ENCODE measurements at regions of chr1 and their contacts with region 1.

Region 1: GRCh38 chr1:147882535-147882934 is 20.1 kb upstream of the GJA8 start:
- DNase-seq: no peak
- ATAC-seq: no peak
- H3K4me3 ChIP-seq: no peak overlapping the region
- H3K27ac ChIP-seq: no peak overlapping the region
- H3K4me1 ChIP-seq: no peaks in the 10 kb centered on the region
- H3K27me3 ChIP-seq: peaks cover 0 to 4% (median 0%) of the 10 kb centered on the region in 4 donors
- CTCF ChIP-seq: no peak

Region 2: DNA sequence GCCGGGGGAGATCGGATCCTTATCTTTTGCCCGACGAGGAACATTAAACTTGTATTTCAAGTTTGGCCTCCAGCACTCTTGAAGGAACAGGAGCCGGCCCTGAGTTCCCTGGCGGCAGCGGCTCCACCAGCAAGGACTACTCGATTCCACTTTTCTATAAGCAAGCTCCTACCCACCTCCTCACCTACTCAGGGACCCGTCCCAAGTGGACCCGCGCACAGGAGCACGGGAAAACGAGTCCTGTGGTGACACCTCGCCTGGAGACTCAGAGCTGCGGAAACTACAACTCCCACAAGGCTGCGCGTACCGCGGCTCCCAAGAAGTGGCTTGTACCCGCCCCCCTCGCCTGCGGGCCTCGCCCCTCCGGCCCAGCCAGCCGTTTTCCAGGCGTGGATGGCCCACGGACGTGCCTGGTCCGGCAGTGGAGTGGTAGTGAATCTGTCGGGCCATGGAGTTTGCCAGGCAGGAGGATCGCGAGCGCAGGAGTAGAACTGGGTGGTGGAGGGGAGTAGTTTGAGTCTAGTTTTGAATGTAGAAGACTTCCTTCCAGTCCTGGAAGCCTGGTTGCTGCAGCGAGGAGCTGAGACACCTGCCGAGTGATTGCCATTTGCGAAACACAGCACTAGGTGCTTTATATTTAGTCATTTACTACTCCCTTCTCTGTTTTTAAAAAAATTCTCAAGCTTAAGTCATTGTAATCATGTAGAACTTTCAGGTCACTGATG is 212.1 kb before region 1 on chr1 and contains the start of gene ACP6:
- intact Hi-C with region 1: no loop called
- DNase-seq: peak; percentile 90 to 98 (median 96)
- ATAC-seq: peak; percentile 96 to 99 (median 98)
- H3K4me3 ChIP-seq: peak within 1 kb of the TSS; percentile 70 to 85 (median 76)
- H3K27ac ChIP-seq: peak within 1 kb of the TSS; percentile 78 to 87 (median 84)
- H3K4me1 ChIP-seq: peaks cover 0 to 14% (median 9%) of the 10 kb centered on the region in 3 donors
- H3K27me3 ChIP-seq: no peaks in the 10 kb centered on the region
- CTCF ChIP-seq: no peak
- total RNA-seq, gene ACP6: 8.5 to 15.9 (median 9.8) TPM

Region 3: GRCh38 chr1:147723691-147724323 is 158.7 kb before region 1 on chr1:
- intact Hi-C with region 1: loop called in 1 of 3 experiments (anchors 10 kb)
- DNase-seq: peak in 1 of 6 donors; percentile 11
- ATAC-seq: peak in 3 of 4 donors; percentile 78 to 93 (median 80)
- H3K4me3 ChIP-seq: no peak overlapping the region
- H3K27ac ChIP-seq: no peak overlapping the region
- H3K4me1 ChIP-seq: peaks cover 0 to 3% (median 0%) of the 10 kb centered on the region in 3 donors
- H3K27me3 ChIP-seq: no peaks in the 10 kb centered on the region
- CTCF ChIP-seq: peak in 1 of 4 donors; percentile 29

Region 4: DNA sequence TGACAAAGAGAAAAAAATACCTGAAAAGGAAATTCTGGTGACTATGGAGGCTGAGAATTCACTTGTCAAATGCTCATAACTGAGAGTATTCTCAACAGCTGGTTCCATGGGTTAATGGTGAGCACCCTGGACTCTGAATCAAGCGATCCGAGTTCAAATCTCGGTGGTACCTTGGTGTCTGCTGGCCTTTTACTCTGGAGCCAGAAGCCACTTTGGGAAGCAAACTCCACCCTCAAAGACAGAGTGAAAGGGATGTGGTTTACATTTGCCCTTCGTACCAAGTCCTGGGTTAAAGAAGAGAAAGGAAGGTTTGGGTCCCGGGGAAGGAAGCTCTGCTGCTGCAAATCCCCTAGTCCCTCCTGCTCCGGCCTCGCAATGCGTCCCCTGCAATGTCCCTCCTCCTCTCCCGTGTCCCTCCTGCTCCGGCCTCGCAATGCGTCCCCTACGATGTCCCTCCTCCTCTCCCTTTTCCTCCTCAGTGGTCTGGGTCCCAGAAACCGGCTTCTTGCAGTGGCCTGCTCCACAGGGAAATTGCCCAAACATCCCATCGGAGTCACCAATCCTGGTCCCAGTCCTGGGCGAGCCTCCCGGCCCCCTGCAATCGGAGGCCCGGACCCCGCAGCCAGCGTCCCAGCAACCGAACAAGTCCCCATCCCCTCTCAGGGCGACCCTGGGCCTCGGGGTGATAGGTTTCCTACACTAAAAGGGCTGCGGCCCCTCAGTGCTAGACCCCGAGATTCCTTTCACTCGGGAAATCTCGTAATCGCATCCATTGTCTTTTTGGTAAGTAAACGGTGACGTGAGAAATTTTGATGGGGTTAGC is 471.1 kb after region 1 on chr1:
- intact Hi-C with region 1: no loop called
- DNase-seq: no peak
- ATAC-seq: no peak
- H3K4me3 ChIP-seq: no peak overlapping the region
- H3K27ac ChIP-seq: no peak overlapping the region
- H3K4me1 ChIP-seq: no peaks in the 10 kb centered on the region
- H3K27me3 ChIP-seq: peaks cover 0 to 23% (median 1%) of the 10 kb centered on the region in 4 donors
- CTCF ChIP-seq: no peak

Measured in pancreas (tissue), 10 donors.